MCF 10A (cell line): ENCODE measurements at regions of chr1 and their contacts with region 1.

Region 1: DNA sequence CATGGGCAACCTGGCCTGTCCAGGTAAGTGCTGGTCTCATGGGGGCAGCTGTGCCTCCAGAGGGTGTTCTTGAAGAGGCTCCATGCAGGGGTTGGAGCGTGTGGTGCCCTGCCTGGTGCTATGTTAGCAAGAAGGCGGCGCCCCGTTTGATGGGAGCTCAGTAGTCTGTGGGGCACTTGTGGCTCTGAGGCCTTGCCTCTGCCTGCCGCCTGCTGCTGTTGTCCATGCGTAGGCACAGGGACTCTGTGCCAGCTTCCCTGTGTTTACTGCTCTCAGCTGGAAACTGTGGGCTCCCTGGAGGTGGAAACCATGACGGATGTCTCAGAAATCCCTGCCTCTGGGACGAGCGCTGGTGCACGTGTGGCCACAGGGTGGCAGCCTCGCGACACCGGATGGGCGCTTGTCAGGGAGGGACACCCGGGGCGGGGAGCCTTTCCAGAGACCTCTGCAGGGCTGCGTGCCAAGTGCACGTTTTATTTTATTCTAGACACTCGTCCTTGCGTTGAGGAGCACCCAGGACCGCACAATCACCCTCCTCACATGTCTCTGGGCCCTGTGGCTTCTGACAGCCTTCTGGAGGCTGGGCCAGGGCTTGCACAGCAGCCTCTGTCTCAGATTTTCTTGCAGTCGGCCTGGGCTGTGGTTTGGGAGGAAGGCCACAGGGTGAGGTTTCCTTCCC is 27.1 kb downstream of the SNAP47 start:
- DNase-seq: peak; percentile 93
- H3K4me3 Mint-ChIP-seq: no peak overlapping the region
- H3K27ac Mint-ChIP-seq: no peak overlapping the region
- H3K4me1 Mint-ChIP-seq: peaks cover 74% of the 10 kb centered on the region
- H3K27me3 Mint-ChIP-seq: no peaks in the 10 kb centered on the region
- CTCF ChIP-seq: peak; percentile 99

Region 2: GRCh38 chr1:227734856-227735538 is 27.4 kb before region 1 on chr1 and contains the starts of genes JMJD4 and SNAP47:
- CTCF ChIA-PET with region 1: interaction called, 12 read pairs
- POLR2A ChIA-PET with region 1: interaction called, 30 read pairs
- intact Hi-C with region 1: no loop called
- DNase-seq: peak; percentile 98
- H3K4me3 Mint-ChIP-seq: peak within 1 kb of the TSS; percentile 95
- H3K27ac Mint-ChIP-seq: peak within 1 kb of the TSS; percentile 93
- H3K4me1 Mint-ChIP-seq: peaks cover 33% of the 10 kb centered on the region
- H3K27me3 Mint-ChIP-seq: no peaks in the 10 kb centered on the region
- CTCF ChIP-seq: no peak
- total RNA-seq, gene JMJD4: 34.0 and 43.2 TPM in 2 replicates
- total RNA-seq, gene SNAP47: 38.0 and 44.0 TPM in 2 replicates

Region 3: GRCh38 chr1:227780101-227781044 is 18.0 kb after region 1 on chr1:
- CTCF ChIA-PET with region 1: interaction called, 22 read pairs
- POLR2A ChIA-PET with region 1: interaction called, 7 read pairs
- intact Hi-C with region 1: no loop called
- DNase-seq: no peak
- H3K4me3 Mint-ChIP-seq: no peak overlapping the region
- H3K27ac Mint-ChIP-seq: no peak overlapping the region
- H3K4me1 Mint-ChIP-seq: no peaks in the 10 kb centered on the region
- H3K27me3 Mint-ChIP-seq: no peaks in the 10 kb centered on the region
- CTCF ChIP-seq: no peak

Region 4: GRCh38 chr1:227805606-227806197 is 43.3 kb after region 1 on chr1:
- CTCF ChIA-PET with region 1: interaction called, 35 read pairs
- POLR2A ChIA-PET with region 1: interaction called, 26 read pairs
- intact Hi-C with region 1: loop called (anchors 1 kb)
- DNase-seq: peak; percentile 100
- H3K4me3 Mint-ChIP-seq: no peak overlapping the region
- H3K27ac Mint-ChIP-seq: peak overlapping the region; percentile 93
- H3K4me1 Mint-ChIP-seq: peaks cover 27% of the 10 kb centered on the region
- H3K27me3 Mint-ChIP-seq: no peaks in the 10 kb centered on the region
- CTCF ChIP-seq: peak; percentile 36

Region 5: GRCh38 chr1:227961651-227962225 is 199.4 kb after region 1 on chr1:
- CTCF ChIA-PET with region 1: interaction called, 12 read pairs
- POLR2A ChIA-PET with region 1: no interaction called
- intact Hi-C with region 1: no loop called
- DNase-seq: no peak
- H3K4me3 Mint-ChIP-seq: no peak overlapping the region
- H3K27ac Mint-ChIP-seq: no peak overlapping the region
- H3K4me1 Mint-ChIP-seq: peaks cover 6% of the 10 kb centered on the region
- H3K27me3 Mint-ChIP-seq: peaks cover 37% of the 10 kb centered on the region
- CTCF ChIP-seq: no peak

Region 6: GRCh38 chr1:228082135-228082891 is 319.9 kb after region 1 on chr1 and contains the start of gene ARF1:
- CTCF ChIA-PET with region 1: interaction called, 3 read pairs
- POLR2A ChIA-PET with region 1: interaction called, 15 read pairs
- intact Hi-C with region 1: no loop called
- DNase-seq: peak; percentile 98
- H3K4me3 Mint-ChIP-seq: peak within 1 kb of the TSS; percentile 98
- H3K27ac Mint-ChIP-seq: peak within 1 kb of the TSS; percentile 97
- H3K4me1 Mint-ChIP-seq: peaks cover 49% of the 10 kb centered on the region
- H3K27me3 Mint-ChIP-seq: no peaks in the 10 kb centered on the region
- CTCF ChIP-seq: no peak
- total RNA-seq, gene ARF1: 870 and 1,140 TPM in 2 replicates